ENCODE measurements at regions of chr10 and their contacts with region 1.

Region 1: DNA sequence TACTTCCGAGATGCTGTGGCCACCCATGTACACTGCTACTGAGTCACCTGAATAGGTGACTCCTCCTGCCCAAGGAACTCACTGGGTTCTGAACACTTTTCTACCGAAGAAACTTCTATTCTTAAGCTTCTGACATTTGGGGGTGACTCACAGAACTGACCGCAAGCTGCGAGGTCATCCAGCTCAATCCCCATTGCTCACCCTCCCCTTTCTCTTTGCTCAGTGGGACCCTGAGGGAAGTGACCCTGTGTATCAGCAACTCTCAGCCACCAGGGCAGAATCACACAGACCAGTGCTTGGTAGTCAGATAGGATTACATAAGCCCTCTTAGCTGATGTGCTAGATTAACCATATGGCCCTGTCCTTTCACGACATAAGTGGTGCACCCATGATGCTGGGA is 46.3 kb downstream of the INSYN2A start:
- DNase-seq: peak; percentile 53
- H3K4me3 Mint-ChIP-seq: no peak overlapping the region
- H3K27ac Mint-ChIP-seq: peak overlapping the region; percentile 52
- H3K4me1 Mint-ChIP-seq: peaks cover 50% of the 10 kb centered on the region
- H3K27me3 Mint-ChIP-seq: no peaks in the 10 kb centered on the region
- CTCF ChIP-seq: no peak

Region 2: GRCh38 chr10:127041552-127041951 is 108.6 kb before region 1 on chr10:
- CTCF ChIA-PET with region 1: no interaction called
- POLR2A ChIA-PET with region 1: no interaction called
- intact Hi-C with region 1: loop called (anchors 5 kb)
- DNase-seq: peak; percentile 85
- H3K4me3 Mint-ChIP-seq: peak overlapping the region; percentile 6
- H3K27ac Mint-ChIP-seq: peak overlapping the region; percentile 21
- H3K4me1 Mint-ChIP-seq: peaks cover 16% of the 10 kb centered on the region
- H3K27me3 Mint-ChIP-seq: no peaks in the 10 kb centered on the region
- CTCF ChIP-seq: no peak

Region 3: GRCh38 chr10:127080317-127080716 is 69.8 kb before region 1 on chr10:
- CTCF ChIA-PET with region 1: no interaction called
- POLR2A ChIA-PET with region 1: no interaction called
- intact Hi-C with region 1: no loop called
- DNase-seq: no peak
- H3K4me3 Mint-ChIP-seq: no peak overlapping the region
- H3K27ac Mint-ChIP-seq: no peak overlapping the region
- H3K4me1 Mint-ChIP-seq: no peaks in the 10 kb centered on the region
- H3K27me3 Mint-ChIP-seq: no peaks in the 10 kb centered on the region
- CTCF ChIP-seq: no peak